ENCODE measurements at regions of chr6 and their contacts with region 1.

Region 1: GRCh38 chr6:28474441-28475219 is 31.3 kb upstream of the ZSCAN23 start:
- DNase-seq: no peak
- H3K4me3 Mint-ChIP-seq: peak overlapping the region; percentile 75
- H3K27ac Mint-ChIP-seq: no peak overlapping the region
- H3K4me1 Mint-ChIP-seq: peaks cover 11% of the 10 kb centered on the region
- H3K27me3 Mint-ChIP-seq: peaks cover 62% of the 10 kb centered on the region

Region 2: DNA sequence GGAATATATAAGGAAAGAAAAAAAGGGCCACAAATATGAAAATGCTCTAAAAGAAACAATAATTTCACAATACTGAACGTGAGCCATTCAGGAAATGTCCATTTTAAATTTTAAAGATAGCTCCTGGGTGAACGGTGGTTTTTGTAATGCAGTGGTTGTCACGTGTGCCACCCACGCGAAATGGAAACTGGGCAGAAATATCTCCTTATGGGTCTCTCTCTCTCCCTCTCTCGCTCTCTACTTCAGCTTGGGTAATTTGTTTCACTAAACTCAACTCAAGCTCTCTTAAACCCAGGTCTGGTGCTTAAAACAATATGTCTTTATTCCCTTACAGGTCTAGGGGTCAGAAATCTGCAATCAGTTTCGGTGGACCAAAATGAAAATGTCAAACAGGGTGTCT is 713.2 kb before region 1 on chr6:
- intact Hi-C with region 1: no loop called
- DNase-seq: no peak
- H3K4me3 Mint-ChIP-seq: no peak overlapping the region
- H3K27ac Mint-ChIP-seq: no peak overlapping the region
- H3K4me1 Mint-ChIP-seq: peaks cover 46% of the 10 kb centered on the region
- H3K27me3 Mint-ChIP-seq: peaks cover 2% of the 10 kb centered on the region

Region 3: GRCh38 chr6:28425944-28426541 is 48.6 kb before region 1 on chr6:
- intact Hi-C with region 1: no loop called
- DNase-seq: no peak
- H3K4me3 Mint-ChIP-seq: no peak overlapping the region
- H3K27ac Mint-ChIP-seq: peak overlapping the region; percentile 37
- H3K4me1 Mint-ChIP-seq: peaks cover 15% of the 10 kb centered on the region
- H3K27me3 Mint-ChIP-seq: peaks cover 31% of the 10 kb centered on the region

Region 4: GRCh38 chr6:28443112-28443773 is 31.4 kb before region 1 on chr6 and contains the start of gene ZSCAN23:
- intact Hi-C with region 1: loop called (anchors 1 kb)
- DNase-seq: peak; percentile 79
- H3K4me3 Mint-ChIP-seq: peak within 1 kb of the TSS; percentile 98
- H3K27ac Mint-ChIP-seq: peak within 1 kb of the TSS; percentile 89
- H3K4me1 Mint-ChIP-seq: peaks cover 41% of the 10 kb centered on the region
- H3K27me3 Mint-ChIP-seq: peaks cover 16% of the 10 kb centered on the region
- total RNA-seq, gene ZSCAN23: 1.1 and 2.2 TPM in 2 replicates

Region 5: GRCh38 chr6:28489366-28490204 is 15.0 kb after region 1 on chr6:
- intact Hi-C with region 1: loop called (anchors 1 kb)
- DNase-seq: peak; percentile 24
- H3K4me3 Mint-ChIP-seq: peak overlapping the region; percentile 78
- H3K27ac Mint-ChIP-seq: peak overlapping the region; percentile 77
- H3K4me1 Mint-ChIP-seq: peaks cover 27% of the 10 kb centered on the region
- H3K27me3 Mint-ChIP-seq: peaks cover 48% of the 10 kb centered on the region

Region 6: DNA sequence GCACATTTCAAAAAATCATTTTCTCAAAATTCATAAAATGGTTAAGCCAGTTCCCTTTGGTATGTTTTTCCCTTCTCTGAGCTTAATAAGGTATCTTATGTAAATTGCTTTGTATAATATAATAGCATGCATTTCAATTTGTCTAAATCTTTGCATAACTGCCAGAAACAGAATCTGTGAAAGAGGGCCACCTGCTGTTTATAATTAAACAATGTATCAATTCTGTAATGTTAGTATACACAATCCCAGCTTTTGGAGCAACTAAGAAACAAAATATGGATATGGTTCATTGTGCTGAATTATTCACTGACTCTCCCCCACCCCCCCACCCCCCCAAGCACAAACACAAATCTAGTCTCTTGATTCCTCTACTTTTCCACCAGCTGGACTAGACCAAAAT is 105.8 kb after region 1 on chr6:
- intact Hi-C with region 1: no loop called
- DNase-seq: no peak
- H3K4me3 Mint-ChIP-seq: no peak overlapping the region
- H3K27ac Mint-ChIP-seq: no peak overlapping the region
- H3K4me1 Mint-ChIP-seq: no peaks in the 10 kb centered on the region
- H3K27me3 Mint-ChIP-seq: peaks cover 6% of the 10 kb centered on the region

Region 7: DNA sequence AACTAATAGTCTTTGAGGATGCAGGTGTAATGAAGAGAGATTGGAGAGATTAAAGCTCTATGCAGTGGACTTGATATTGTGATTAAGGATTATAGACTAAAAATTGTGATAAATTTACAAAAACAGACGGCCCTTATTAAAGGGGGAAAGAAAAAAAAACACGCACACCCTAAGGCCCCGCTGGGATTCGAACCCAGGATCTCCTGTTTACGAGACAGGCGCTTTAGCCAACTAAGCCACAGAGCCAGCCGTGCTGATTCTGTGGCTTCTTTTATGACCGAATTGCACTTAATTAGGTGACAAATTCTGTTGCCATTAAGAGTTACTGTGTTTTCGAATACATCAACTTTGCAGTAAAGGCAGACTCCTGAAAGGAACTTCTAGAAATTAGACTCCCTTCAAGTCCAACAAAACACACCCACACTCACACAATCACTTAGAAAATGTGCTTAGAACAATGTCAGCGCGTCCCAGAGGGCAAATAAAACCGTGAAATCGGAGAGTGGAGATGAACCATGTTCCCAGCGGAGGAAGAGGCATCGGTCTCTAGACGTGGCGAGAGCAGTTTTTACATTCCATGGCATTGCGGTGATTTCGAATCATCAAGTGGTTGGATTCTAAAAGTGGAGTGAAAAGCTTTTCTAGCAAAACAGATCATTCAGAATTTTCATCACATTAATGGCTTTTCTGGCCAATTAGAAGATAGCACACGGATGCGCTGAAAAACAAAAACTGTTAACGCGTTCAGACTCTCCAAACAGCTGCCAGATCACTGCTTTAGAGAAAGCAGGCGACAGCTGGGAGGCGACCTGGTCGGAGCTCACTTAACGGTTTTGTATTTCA is 173.6 kb after region 1 on chr6:
- intact Hi-C with region 1: loop called (anchors 10 kb)
- DNase-seq: peak; percentile 28
- H3K4me3 Mint-ChIP-seq: peak overlapping the region; percentile 98
- H3K27ac Mint-ChIP-seq: peak overlapping the region; percentile 74
- H3K4me1 Mint-ChIP-seq: peaks cover 14% of the 10 kb centered on the region
- H3K27me3 Mint-ChIP-seq: peaks cover 44% of the 10 kb centered on the region

Region 8: GRCh38 chr6:28981833-28982475 is 507.3 kb after region 1 on chr6:
- intact Hi-C with region 1: loop called (anchors 10 kb)
- DNase-seq: peak; percentile 59
- H3K4me3 Mint-ChIP-seq: peak overlapping the region; percentile 90
- H3K27ac Mint-ChIP-seq: peak overlapping the region; percentile 95
- H3K4me1 Mint-ChIP-seq: peaks cover 59% of the 10 kb centered on the region
- H3K27me3 Mint-ChIP-seq: peaks cover 22% of the 10 kb centered on the region